Right cardiac atrium (tissue), 5 donors: ENCODE measurements at regions of chr13 and their contacts with region 1.

Region 1: DNA sequence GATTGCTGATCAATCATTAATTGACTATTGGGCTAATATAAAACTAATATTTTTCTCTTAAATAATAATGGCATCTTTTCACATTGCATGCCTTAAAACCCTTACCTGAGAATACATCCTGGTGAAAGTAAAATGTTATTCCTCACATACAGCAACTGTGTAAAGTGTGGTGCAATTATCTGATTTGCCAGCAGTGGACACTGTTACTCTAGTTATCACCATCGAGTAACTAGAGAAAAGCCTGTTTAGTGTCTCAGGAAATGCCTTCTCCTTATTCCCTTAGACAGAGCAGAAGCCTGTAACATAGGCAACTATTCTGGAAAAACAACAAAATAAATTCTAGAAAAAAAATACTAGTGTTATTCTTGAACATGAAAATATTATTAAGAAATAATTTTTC is 459.8 kb downstream of the FGF14 start:
- DNase-seq: no peak
- ATAC-seq: peak; percentile 85 to 90
- H3K4me3 ChIP-seq: no peak overlapping the region
- H3K27ac ChIP-seq: no peak overlapping the region
- H3K4me1 ChIP-seq: no peaks in the 10 kb centered on the region
- H3K27me3 ChIP-seq: no peaks in the 10 kb centered on the region

Region 2: DNA sequence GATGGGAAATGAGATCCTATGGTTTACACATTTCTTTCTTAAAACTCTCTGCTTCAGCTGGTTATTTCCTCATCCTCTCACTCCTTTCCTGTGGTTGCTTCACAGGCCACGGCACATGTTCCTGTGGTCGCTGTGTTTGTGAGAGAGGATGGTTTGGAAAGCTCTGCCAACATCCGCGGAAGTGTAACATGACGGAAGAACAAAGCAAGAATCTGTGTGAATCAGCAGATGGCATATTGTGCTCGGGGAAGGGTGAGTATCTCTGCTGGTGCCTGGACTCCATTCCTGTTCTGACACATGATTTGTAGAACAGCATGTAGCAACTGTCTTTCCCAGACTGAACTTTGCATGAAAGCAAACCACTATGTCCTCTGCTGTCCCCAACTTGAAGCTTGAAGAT is 235.4 kb before region 1 on chr13:
- intact Hi-C with region 1: no loop called
- DNase-seq: peak in 2 of 3 donors; percentile 12 to 54
- ATAC-seq: peak; percentile 57 to 71
- H3K4me3 ChIP-seq: no peak overlapping the region
- H3K27ac ChIP-seq: no peak overlapping the region
- H3K4me1 ChIP-seq: no peaks in the 10 kb centered on the region
- H3K27me3 ChIP-seq: no peaks in the 10 kb centered on the region

Region 3: DNA sequence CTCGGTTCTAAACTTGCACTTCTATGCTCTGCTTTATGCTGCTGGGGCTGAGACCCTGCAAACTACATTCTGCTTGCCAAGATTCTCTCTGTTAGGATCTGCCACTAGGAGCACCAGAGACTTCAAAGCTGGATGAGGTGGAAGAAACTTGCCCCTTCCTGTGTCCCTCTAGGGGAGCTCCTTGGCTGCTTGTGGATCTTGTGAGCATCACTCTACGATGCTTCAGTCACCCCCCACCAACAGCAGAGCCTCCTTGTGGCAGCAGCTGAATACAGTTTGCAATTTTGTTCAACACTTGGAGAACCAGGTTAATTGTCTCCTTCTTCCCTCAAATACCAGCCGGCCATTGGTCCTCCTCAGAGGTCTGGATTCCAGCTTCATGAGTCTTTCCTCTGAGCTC is 149.2 kb after region 1 on chr13:
- intact Hi-C with region 1: loop called in 1 of 4 experiments (anchors 10 kb)
- DNase-seq: no peak
- ATAC-seq: no peak
- H3K4me3 ChIP-seq: no peak overlapping the region
- H3K27ac ChIP-seq: no peak overlapping the region
- H3K4me1 ChIP-seq: peaks cover 2% of the 10 kb centered on the region
- H3K27me3 ChIP-seq: no peaks in the 10 kb centered on the region

Region 4: DNA sequence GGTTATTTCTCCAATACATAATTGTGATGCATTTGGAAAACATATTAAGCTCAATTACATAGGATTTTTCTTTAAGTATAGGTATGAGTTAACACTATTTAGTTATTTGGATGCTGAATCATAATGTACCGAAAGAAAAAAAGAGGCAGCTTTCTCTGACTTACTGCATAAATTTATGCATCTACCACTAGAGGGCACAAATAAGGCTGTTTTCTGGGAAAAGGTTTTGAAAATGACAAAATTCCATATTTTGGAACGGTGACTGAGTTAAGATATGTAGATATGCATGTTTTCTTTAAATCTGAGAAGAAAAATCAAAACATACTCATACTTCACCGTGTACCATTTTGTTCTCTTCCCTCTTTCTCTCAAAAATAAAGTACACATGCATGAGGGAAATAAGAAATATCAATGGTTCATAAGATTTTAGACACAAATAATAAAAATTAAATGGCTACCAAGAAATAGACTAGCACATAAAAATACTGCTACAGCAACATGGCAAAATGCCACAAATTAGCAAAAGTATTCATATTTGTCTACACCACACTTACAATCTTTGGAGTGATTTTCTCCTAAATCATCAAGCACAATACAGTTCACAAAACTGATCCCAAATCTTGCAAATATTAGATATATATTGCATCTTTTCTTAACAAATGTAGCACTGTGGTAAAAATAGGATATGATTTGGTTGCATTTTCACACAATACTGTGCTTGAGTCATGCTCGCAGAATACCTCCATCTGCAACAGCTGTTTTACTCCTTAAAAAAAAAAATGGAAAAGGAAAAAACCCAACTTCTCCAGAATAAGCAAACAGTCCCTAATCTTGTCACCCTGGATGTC is 199.8 kb after region 1 on chr13:
- intact Hi-C with region 1: loop called in 2 of 4 experiments (anchors 10 kb)
- DNase-seq: no peak
- ATAC-seq: no peak
- H3K4me3 ChIP-seq: no peak overlapping the region
- H3K27ac ChIP-seq: no peak overlapping the region
- H3K4me1 ChIP-seq: no peaks in the 10 kb centered on the region
- H3K27me3 ChIP-seq: no peaks in the 10 kb centered on the region

Region 5: DNA sequence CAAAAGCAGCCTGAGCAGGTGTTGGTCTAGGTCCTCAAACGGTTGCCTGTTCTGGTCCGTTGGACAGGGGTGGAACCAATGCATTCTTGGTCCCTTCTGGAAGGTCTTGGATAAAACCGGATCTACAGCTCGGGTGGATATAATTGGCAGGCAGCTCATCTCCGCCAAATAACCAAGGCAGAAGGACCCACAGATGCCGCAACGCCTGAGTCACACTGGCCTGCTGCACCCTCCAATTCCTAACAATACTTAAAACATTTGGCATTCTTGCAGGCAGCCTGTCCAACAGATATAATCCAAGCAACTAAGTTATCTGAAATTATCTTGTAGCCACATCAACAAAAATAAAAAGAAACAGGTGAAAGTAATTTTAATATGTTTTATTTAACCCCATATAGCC is 518.8 kb after region 1 on chr13:
- intact Hi-C with region 1: loop called (anchors 2 to 5 kb)
- DNase-seq: no peak
- ATAC-seq: no peak
- H3K4me3 ChIP-seq: no peak overlapping the region
- H3K27ac ChIP-seq: no peak overlapping the region
- H3K4me1 ChIP-seq: no peaks in the 10 kb centered on the region
- H3K27me3 ChIP-seq: no peaks in the 10 kb centered on the region

Region 6: GRCh38 chr13:102550507-102550906 is 608.5 kb after region 1 on chr13:
- intact Hi-C with region 1: loop called (anchors 5 to 10 kb)
- DNase-seq: no peak
- ATAC-seq: no peak
- H3K4me3 ChIP-seq: no peak overlapping the region
- H3K27ac ChIP-seq: no peak overlapping the region
- H3K4me1 ChIP-seq: no peaks in the 10 kb centered on the region
- H3K27me3 ChIP-seq: no peaks in the 10 kb centered on the region

Region 7: DNA sequence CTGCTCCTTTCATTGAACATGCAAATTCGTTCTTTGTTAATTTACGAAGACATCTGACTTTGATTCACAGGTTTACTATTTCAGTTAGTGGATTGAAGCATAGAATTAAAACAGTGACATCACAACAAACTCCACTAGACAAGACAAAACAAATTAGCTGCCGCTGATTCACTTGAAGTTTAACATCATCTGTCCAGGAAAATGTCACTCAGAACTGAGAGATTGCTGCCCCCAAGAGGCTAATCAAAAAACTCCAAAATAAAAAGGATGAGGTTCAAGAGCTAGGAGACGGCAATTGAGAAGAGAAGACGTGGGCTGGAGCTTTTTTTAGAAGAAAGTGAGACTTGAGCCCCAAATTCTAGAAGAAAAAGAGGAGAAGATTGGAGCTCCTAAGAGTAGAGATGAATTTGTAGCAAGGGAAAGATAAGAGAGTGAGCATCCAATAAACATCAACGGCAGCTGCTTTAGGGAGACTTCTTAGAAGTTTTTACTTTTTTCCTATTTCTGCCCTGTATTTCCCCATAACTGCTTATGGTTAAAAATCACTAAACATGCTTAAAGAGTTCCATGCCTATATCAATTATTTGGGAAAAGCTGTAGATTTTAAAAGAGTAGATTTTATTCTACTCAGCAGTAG is 614.0 kb after region 1 on chr13:
- intact Hi-C with region 1: loop called (anchors 5 to 10 kb)
- DNase-seq: no peak
- ATAC-seq: peak in 1 of 2 donors; percentile 35
- H3K4me3 ChIP-seq: no peak overlapping the region
- H3K27ac ChIP-seq: no peak overlapping the region
- H3K4me1 ChIP-seq: no peaks in the 10 kb centered on the region
- H3K27me3 ChIP-seq: no peaks in the 10 kb centered on the region